B cell (primary cell): ENCODE measurements at regions of chr17 and their contacts with region 1.

Region 1: GRCh38 chr17:35119368-35120165 is at the start of gene RAD51D:
- DNase-seq: peak; percentile 91
- ATAC-seq: peak; percentile 90
- H3K4me3 ChIP-seq: peak within 1 kb of the TSS; percentile 58 to 96 (median 90)
- H3K4me3 Mint-ChIP-seq: peak within 1 kb of the TSS; percentile 93
- H3K27ac ChIP-seq: peak within 1 kb of the TSS; percentile 73 to 85
- H3K27ac Mint-ChIP-seq: peak within 1 kb of the TSS; percentile 90
- H3K4me1 ChIP-seq: peaks cover 16 to 18% of the 10 kb centered on the region in 2 donors
- H3K4me1 Mint-ChIP-seq: peaks cover 27% of the 10 kb centered on the region
- H3K27me3 ChIP-seq: no peaks in the 10 kb centered on the region
- H3K27me3 Mint-ChIP-seq: no peaks in the 10 kb centered on the region
- CTCF ChIP-seq: peak; percentile 94
- total RNA-seq, gene RAD51D: 29.4 and 31.2 TPM in 2 replicates

Region 2: DNA sequence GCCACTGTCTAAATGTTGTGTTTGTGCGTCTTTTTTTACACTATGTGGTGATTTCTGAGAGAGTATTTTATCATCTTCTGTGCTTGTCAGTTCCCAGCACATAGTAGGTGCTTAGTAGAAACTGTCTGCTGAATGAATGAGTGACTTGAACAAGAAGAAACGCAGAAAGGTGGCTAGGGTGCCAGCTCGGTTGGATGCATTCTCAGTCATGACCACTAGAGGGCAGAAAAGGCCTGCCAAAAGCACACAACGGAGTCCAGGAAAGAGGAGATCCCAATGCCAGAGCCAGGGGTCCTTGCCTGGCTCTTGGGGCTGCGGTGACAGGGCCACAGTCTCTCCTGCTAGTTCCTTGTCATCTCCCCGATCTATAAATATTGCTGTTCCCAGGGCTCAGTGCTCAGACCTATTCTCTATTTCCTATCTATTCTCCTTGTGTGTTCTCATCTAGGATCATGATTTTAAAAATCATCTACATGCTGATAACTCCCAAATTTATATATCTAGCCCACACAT is 699.3 kb before region 1 on chr17:
- CTCF ChIA-PET with region 1: interaction called, 39 read pairs
- POLR2A ChIA-PET with region 1: no interaction called
- intact Hi-C with region 1: no loop called
- DNase-seq: peak; percentile 75
- ATAC-seq: peak; percentile 58
- H3K4me3 ChIP-seq: no peak overlapping the region
- H3K4me3 Mint-ChIP-seq: no peak overlapping the region
- H3K27ac ChIP-seq: no peak overlapping the region
- H3K27ac Mint-ChIP-seq: no peak overlapping the region
- H3K4me1 ChIP-seq: peaks cover 6 to 11% of the 10 kb centered on the region in 2 donors
- H3K4me1 Mint-ChIP-seq: no peaks in the 10 kb centered on the region
- H3K27me3 ChIP-seq: peaks cover 0 to 16% (median 5%) of the 10 kb centered on the region in 4 experiments
- H3K27me3 Mint-ChIP-seq: peaks cover 44% of the 10 kb centered on the region
- CTCF ChIP-seq: peak; percentile 99

Region 3: GRCh38 chr17:34542700-34543336 is 576.7 kb before region 1 on chr17:
- CTCF ChIA-PET with region 1: interaction called, 27 read pairs
- POLR2A ChIA-PET with region 1: no interaction called
- intact Hi-C with region 1: no loop called
- DNase-seq: peak; percentile 65
- ATAC-seq: peak; percentile 45
- H3K4me3 ChIP-seq: no peak overlapping the region
- H3K4me3 Mint-ChIP-seq: no peak overlapping the region
- H3K27ac ChIP-seq: no peak overlapping the region
- H3K27ac Mint-ChIP-seq: no peak overlapping the region
- H3K4me1 ChIP-seq: no peaks in the 10 kb centered on the region
- H3K4me1 Mint-ChIP-seq: no peaks in the 10 kb centered on the region
- H3K27me3 ChIP-seq: peaks cover 0 to 22% (median 10%) of the 10 kb centered on the region in 4 experiments
- H3K27me3 Mint-ChIP-seq: peaks cover 44% of the 10 kb centered on the region
- CTCF ChIP-seq: peak; percentile 92

Region 4: DNA sequence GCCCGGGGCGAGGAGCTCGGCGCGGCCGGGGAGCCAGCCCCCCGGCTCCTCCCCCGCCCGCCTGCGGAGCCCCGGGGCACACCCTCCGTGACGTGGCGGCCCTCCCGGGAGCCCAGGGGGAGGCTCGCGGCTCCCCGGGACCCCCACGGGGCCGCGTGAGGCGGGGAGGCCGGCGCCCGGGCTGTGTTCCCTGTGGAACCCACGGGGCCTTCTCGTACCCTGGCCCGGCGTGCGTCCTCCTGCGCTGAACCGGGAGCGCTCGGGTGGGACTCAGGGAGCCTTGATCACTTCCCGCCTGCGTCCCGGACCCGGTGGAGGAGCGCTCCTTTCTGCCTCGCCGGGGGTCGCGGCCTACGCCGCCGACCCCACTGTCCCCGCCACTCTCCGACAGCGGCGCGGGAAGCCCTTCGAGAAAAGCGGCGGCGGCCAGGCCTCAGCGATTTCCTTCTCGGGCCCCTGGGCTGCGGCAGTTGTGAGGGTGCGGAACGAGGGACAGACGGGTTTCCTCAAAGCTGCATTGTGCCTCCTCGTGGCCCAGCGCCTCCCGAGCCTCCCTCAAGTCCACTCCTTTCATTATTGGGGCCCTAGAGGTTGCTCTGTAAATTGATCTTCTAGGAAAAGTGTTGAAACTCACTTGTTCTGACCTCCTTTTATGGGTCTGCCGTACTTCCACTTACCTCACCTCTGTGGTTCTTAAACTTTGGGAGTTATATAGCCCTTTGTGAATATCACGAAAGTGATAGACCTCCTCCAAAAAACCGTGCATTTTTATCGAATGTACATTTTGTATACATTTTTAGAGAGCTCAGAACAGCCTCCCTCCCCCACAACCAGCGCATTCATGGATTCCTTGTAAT is 138.7 kb before region 1 on chr17:
- CTCF ChIA-PET with region 1: interaction called, 16 read pairs
- POLR2A ChIA-PET with region 1: no interaction called
- intact Hi-C with region 1: no loop called
- DNase-seq: peak; percentile 88
- ATAC-seq: peak; percentile 91
- H3K4me3 ChIP-seq: peak overlapping the region; percentile 8 to 98 (median 93)
- H3K4me3 Mint-ChIP-seq: peak overlapping the region; percentile 98
- H3K27ac ChIP-seq: peak overlapping the region; percentile 95 to 99
- H3K27ac Mint-ChIP-seq: peak overlapping the region; percentile 97
- H3K4me1 ChIP-seq: peaks cover 15 to 16% of the 10 kb centered on the region in 2 donors
- H3K4me1 Mint-ChIP-seq: peaks cover 28% of the 10 kb centered on the region
- H3K27me3 ChIP-seq: no peaks in the 10 kb centered on the region
- H3K27me3 Mint-ChIP-seq: no peaks in the 10 kb centered on the region
- CTCF ChIP-seq: peak; percentile 63

Region 5: GRCh38 chr17:34998205-34998604 is 121.4 kb before region 1 on chr17:
- CTCF ChIA-PET with region 1: interaction called, 54 read pairs
- POLR2A ChIA-PET with region 1: no interaction called
- intact Hi-C with region 1: loop called (anchors 1 kb)
- DNase-seq: peak; percentile 78
- ATAC-seq: peak; percentile 97
- H3K4me3 ChIP-seq: no peak overlapping the region
- H3K4me3 Mint-ChIP-seq: no peak overlapping the region
- H3K27ac ChIP-seq: no peak overlapping the region
- H3K27ac Mint-ChIP-seq: peak overlapping the region; percentile 70
- H3K4me1 ChIP-seq: no peaks in the 10 kb centered on the region
- H3K4me1 Mint-ChIP-seq: peaks cover 3% of the 10 kb centered on the region
- H3K27me3 ChIP-seq: no peaks in the 10 kb centered on the region
- H3K27me3 Mint-ChIP-seq: no peaks in the 10 kb centered on the region
- CTCF ChIP-seq: peak; percentile 84

Region 6: DNA sequence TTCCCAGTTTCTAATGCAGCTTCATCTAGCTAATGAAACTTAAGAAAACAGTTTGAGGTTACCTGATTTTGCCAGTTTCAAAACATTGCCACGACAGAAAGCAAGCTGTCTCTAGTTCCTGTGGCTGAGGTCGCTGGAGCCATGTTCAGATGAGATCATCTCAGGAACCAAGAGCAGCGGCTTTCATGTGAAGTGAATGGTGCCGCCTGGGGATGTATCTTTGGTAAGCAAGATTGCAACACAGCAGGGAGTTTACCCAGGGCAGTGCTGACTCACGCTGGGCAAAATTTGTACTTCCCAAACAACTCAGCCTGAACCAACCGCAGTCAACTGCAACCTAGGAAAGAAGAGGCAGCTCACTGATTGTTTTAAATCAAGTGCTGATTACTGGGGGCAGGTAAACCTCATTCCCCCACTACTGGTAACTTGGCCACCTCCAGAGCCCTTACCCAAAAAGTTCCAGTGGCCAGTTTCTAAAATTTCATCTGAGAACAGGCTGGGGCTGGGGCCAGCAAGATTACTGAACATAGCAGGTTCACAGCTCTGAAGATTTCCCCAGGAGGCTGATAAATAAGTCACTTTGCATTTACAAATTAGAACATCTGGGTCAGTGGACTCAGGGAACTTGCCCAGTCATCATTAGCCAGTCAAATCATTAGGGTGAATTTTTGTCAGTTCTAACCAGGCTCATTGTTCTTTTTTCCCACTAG is 55.9 kb before region 1 on chr17 and contains the start of gene RFFL:
- CTCF ChIA-PET with region 1: interaction called, 11 read pairs
- POLR2A ChIA-PET with region 1: no interaction called
- intact Hi-C with region 1: loop called (anchors 10 kb)
- DNase-seq: peak; percentile 82
- ATAC-seq: peak; percentile 97
- H3K4me3 ChIP-seq: peak within 1 kb of the TSS in 3 of 5 experiments; percentile 20 to 38 (median 30)
- H3K4me3 Mint-ChIP-seq: peak within 1 kb of the TSS; percentile 75
- H3K27ac ChIP-seq: peak within 1 kb of the TSS; percentile 42 to 63
- H3K27ac Mint-ChIP-seq: peak within 1 kb of the TSS; percentile 90
- H3K4me1 ChIP-seq: peaks cover 11 to 12% of the 10 kb centered on the region in 2 donors
- H3K4me1 Mint-ChIP-seq: peaks cover 28% of the 10 kb centered on the region
- H3K27me3 ChIP-seq: no peaks in the 10 kb centered on the region
- H3K27me3 Mint-ChIP-seq: no peaks in the 10 kb centered on the region
- CTCF ChIP-seq: no peak
- total RNA-seq, gene RFFL: 36.2 and 36.9 TPM in 2 replicates

Region 7: GRCh38 chr17:35141681-35142466 is 22.3 kb after region 1 on chr17 and contains the start of gene NLE1:
- CTCF ChIA-PET with region 1: interaction called, 6 read pairs
- POLR2A ChIA-PET with region 1: no interaction called
- intact Hi-C with region 1: loop called (anchors 1 kb)
- DNase-seq: peak; percentile 89
- ATAC-seq: peak; percentile 98
- H3K4me3 ChIP-seq: peak within 1 kb of the TSS; percentile 73 to 93 (median 84)
- H3K4me3 Mint-ChIP-seq: peak within 1 kb of the TSS; percentile 87
- H3K27ac ChIP-seq: peak within 1 kb of the TSS in 1 of 2 donors; percentile 64
- H3K27ac Mint-ChIP-seq: peak within 1 kb of the TSS; percentile 56
- H3K4me1 ChIP-seq: peaks cover 5 to 11% of the 10 kb centered on the region in 2 donors
- H3K4me1 Mint-ChIP-seq: peaks cover 20% of the 10 kb centered on the region
- H3K27me3 ChIP-seq: no peaks in the 10 kb centered on the region
- H3K27me3 Mint-ChIP-seq: no peaks in the 10 kb centered on the region
- CTCF ChIP-seq: peak; percentile 95
- total RNA-seq, gene NLE1: 13.7 and 17.5 TPM in 2 replicates

Region 8: DNA sequence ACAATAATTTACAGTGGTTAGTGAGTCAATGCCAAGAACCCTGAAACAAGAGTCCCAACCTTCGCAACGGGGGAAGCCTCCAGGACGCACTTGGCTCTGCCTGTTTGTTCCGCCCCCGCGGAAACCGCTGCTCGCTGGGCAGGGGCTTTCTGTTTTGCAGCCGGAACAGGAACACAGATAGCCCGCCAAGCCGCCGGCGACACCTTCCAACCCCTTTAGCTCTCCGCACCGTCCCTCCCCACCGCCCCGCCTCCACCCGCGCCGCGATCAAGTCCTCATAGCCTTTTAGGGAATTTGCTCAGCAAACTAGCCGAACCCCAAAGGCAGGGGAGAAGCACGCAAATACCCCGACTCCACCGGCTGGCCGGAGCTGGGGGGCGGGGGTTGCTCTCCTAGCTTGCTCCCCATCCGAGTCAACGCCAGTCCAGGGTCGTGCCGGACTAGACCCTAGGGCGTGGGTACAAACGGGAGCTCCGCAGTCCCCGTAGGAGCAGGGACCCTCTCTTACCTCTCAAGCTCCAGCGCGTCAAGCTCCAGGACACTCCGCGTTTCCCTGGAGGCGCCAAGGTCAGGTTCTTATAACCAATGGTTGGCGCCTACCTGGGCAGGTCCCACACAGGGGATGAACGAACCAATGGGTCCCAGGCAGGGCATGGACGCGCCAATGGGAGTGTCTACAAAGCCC is 328.8 kb after region 1 on chr17 and contains the start of gene SLFN13:
- CTCF ChIA-PET with region 1: no interaction called
- POLR2A ChIA-PET with region 1: no interaction called
- intact Hi-C with region 1: no loop called
- DNase-seq: peak; percentile 87
- ATAC-seq: peak; percentile 84
- H3K4me3 ChIP-seq: peak within 1 kb of the TSS; percentile 48 to 90 (median 83)
- H3K4me3 Mint-ChIP-seq: peak within 1 kb of the TSS; percentile 93
- H3K27ac ChIP-seq: peak within 1 kb of the TSS; percentile 79 to 84
- H3K27ac Mint-ChIP-seq: peak within 1 kb of the TSS; percentile 87
- H3K4me1 ChIP-seq: peaks cover 14 to 26% of the 10 kb centered on the region in 2 donors
- H3K4me1 Mint-ChIP-seq: peaks cover 25% of the 10 kb centered on the region
- H3K27me3 ChIP-seq: no peaks in the 10 kb centered on the region
- H3K27me3 Mint-ChIP-seq: no peaks in the 10 kb centered on the region
- CTCF ChIP-seq: no peak
- total RNA-seq, gene SLFN13: 30.9 and 31.0 TPM in 2 replicates